ENCODE measurements at regions of chr1 and their contacts with region 1.

Region 1: GRCh38 chr1:181134543-181135362 is 46.3 kb downstream of the IER5 start:
- DNase-seq: peak in 4 of 6 donors; percentile 42 to 90 (median 83)
- ATAC-seq: peak; percentile 64 to 92 (median 82)
- H3K4me3 ChIP-seq: peak overlapping the region in 1 of 4 donors; percentile 14
- H3K27ac ChIP-seq: peak overlapping the region; percentile 26 to 61 (median 48)
- H3K4me1 ChIP-seq: peaks cover 6 to 9% (median 7%) of the 10 kb centered on the region in 3 donors
- H3K27me3 ChIP-seq: no peaks in the 10 kb centered on the region
- CTCF ChIP-seq: no peak

Region 2: GRCh38 chr1:181088079-181089016 is 46.4 kb before region 1 on chr1 and contains the start of gene IER5:
- intact Hi-C with region 1: loop called in 1 of 3 experiments (anchors 10 kb)
- DNase-seq: peak; percentile 92 to 98 (median 96)
- ATAC-seq: peak; percentile 90 to 96 (median 94)
- H3K4me3 ChIP-seq: peak within 1 kb of the TSS; percentile 66 to 94 (median 80)
- H3K27ac ChIP-seq: peak within 1 kb of the TSS; percentile 11 to 79 (median 57)
- H3K4me1 ChIP-seq: peaks cover 0 to 5% (median 3%) of the 10 kb centered on the region in 3 donors
- H3K27me3 ChIP-seq: no peaks in the 10 kb centered on the region
- CTCF ChIP-seq: no peak
- total RNA-seq, gene IER5: 2.6 to 6.8 (median 3.5) TPM